ENCODE measurements at regions of chr2 and their contacts with region 1.

Region 1: GRCh38 chr2:121356058-121356640 is 71.1 kb upstream of the TFCP2L1 start:
- DNase-seq: peak; percentile 70

Region 2: DNA sequence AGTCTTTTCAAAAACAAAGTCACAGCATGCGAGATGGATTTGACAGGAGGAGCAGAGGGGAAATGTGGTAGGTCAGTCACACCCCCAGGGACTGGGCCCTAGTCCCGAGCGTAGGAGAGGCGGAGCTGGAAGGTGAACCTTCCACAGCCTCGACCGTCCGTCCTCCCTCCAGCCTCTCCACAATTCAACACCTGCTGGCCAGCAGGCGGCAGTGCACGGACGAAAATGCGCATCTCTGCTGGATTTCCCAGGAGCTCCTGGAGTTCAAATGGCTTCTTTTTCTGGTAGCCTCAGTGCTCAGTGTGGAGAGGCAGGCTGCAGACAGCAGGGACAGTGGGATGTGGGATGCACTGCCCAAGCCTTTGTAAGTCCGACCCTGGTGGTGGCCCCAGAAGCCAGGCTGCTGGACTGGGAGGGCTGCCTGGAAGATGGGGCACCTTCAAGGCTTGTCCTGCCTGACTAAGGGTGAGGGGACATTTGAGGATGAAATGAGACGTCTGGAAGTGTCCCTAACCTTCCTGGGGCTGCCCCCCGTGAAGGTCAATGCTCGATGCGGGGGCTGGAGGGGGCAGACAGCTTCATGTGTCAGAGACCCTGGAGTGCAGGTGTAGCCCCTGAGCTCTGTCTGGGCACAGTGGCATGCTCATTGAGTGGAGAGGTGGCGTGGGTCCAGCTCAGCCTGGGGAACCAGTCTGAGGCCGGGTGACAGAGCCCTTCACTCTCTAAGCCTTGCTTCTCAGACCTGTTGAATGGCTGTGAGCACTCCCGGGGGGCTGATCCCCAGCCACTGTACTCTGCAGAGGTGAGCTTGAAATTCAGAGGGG is 260.7 kb before region 1 on chr2:
- CTCF ChIA-PET with region 1: interaction called, 47 read pairs
- POLR2A ChIA-PET with region 1: no interaction called
- DNase-seq: peak; percentile 85

Region 3: DNA sequence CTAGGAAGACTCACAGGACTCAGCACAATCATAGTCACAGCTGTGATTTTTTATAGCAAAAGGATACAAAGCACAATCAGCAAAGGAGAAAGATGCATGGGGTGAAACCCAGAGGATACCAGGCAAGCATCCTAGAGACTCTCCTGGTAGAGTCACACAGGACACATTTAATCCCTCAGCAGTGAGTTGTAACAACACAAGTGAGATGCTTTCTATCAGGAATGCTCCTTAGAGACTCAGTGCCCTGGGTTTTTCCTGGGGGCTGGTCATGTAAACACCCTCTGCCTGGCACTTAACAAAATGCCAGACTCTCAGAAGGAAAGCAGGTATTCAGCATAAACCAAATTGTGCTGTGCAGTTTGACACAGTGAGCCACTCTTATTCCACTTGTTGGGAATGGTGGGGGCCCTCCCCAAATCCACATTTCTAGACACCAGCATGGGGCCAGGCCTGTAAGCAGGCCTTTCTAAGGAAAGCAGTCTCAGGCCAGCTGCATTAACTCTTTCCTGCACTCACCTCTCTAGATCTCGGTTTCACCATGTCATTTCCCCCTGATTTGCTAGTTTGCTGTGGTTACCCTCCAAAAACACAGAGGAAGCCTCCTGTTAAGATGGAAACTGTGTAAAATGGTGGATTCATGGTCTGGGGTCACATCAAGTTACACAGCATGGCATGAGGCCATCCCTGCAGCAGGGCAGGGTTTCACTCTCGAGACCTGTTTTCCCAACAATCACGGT is 157.6 kb after region 1 on chr2:
- CTCF ChIA-PET with region 1: no interaction called
- POLR2A ChIA-PET with region 1: no interaction called
- DNase-seq: no peak

Region 4: GRCh38 chr2:121699421-121700333 is 343.5 kb after region 1 on chr2:
- CTCF ChIA-PET with region 1: no interaction called
- POLR2A ChIA-PET with region 1: no interaction called
- DNase-seq: no peak